ENCODE measurements at regions of chr20 and their contacts with region 1.

Region 1: DNA sequence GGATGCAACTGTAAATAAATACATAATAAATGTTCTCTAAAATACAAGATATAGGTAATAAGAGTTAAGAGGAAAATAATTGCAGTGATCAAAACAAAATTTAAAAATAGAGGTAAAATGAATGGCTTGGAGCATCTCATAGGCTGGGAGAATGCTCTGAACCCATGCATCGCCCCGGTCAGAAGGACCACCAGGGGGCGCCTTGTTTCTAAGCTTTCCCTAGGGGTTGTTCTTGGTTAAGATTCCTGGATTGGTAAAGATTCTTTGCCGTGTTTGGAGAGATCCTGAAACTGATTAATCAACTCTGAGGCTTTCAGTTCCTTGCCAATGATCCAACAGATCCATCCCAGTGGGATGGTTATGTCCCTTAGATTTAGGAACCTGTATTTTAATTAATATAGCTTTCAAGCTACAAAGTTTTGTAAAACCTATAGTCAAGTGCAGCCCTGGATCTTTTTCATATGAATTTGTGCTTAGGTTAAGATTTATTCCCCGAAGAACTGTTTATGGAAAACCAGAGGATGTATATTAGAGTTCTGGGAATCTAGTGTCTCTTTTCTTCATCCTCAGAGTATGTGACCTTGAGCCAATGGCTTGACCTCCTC is 45.3 kb upstream of the PRELID3B start:
- DNase-seq: peak; percentile 79
- H3K4me3 ChIP-seq: no peak overlapping the region
- H3K27ac ChIP-seq: no peak overlapping the region
- H3K4me1 ChIP-seq: no peaks in the 10 kb centered on the region
- H3K27me3 ChIP-seq: peaks cover 46% of the 10 kb centered on the region
- CTCF ChIP-seq: peak; percentile 91

Region 2: DNA sequence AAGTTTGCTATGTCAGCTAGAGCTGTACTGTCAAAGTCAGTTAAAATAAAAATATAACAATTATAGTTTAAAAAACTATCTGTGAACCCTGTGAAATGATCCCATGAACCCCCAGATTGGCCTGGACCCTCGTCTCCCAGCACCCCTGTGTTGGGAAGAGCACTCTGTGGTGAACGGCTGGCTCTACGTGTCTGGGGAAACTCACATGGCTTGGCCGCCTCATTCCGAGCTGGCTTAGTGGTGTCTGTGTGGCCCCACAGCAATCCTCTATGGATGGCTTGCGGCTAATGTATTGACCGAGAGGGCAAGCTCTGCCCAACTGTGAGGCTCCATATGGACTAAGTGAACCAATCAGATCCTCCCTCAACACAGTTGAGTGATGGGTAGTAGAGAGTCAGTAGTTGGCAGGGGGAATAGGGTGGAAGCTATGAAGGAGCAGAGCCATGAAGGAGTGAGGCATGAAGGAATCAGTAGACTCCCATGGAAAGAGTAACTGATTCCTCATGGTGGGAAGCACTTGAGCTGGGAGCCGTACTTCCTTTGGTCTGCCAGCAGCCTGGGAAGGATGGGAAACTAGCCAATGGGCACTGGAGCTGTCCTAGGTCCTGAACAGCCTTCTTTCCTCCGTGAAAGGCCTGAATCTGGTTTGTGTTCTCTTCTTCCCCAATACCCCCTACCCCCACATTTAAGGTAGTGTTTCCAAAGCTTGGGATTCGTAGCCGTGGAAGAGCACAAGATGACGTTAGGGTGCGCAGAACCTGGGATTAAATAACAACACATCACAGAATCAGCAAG is 54.1 kb after region 1 on chr20:
- CTCF ChIA-PET with region 1: no interaction called
- POLR2A ChIA-PET with region 1: no interaction called
- intact Hi-C with region 1: no loop called
- DNase-seq: peak; percentile 26
- H3K4me3 ChIP-seq: no peak overlapping the region
- H3K27ac ChIP-seq: no peak overlapping the region
- H3K4me1 ChIP-seq: no peaks in the 10 kb centered on the region
- H3K27me3 ChIP-seq: peaks cover 3% of the 10 kb centered on the region
- CTCF ChIP-seq: no peak

Region 3: GRCh38 chr20:59159493-59160376 is 71.8 kb after region 1 on chr20:
- CTCF ChIA-PET with region 1: no interaction called
- POLR2A ChIA-PET with region 1: no interaction called
- intact Hi-C with region 1: loop called (anchors 5 kb)
- DNase-seq: no peak
- H3K4me3 ChIP-seq: no peak overlapping the region
- H3K27ac ChIP-seq: no peak overlapping the region
- H3K4me1 ChIP-seq: no peaks in the 10 kb centered on the region
- H3K27me3 ChIP-seq: peaks cover 16% of the 10 kb centered on the region
- CTCF ChIP-seq: no peak

Region 4: GRCh38 chr20:59222253-59223181 is 134.6 kb after region 1 on chr20:
- CTCF ChIA-PET with region 1: interaction called, 15 read pairs
- POLR2A ChIA-PET with region 1: no interaction called
- intact Hi-C with region 1: loop called (anchors 1 kb)
- DNase-seq: peak; percentile 79
- H3K4me3 ChIP-seq: peak overlapping the region; percentile 47
- H3K27ac ChIP-seq: no peak overlapping the region
- H3K4me1 ChIP-seq: peaks cover 13% of the 10 kb centered on the region
- H3K27me3 ChIP-seq: peaks cover 79% of the 10 kb centered on the region
- CTCF ChIP-seq: peak; percentile 96

Region 5: GRCh38 chr20:59322899-59323454 is 235.0 kb after region 1 on chr20:
- CTCF ChIA-PET with region 1: no interaction called
- POLR2A ChIA-PET with region 1: no interaction called
- intact Hi-C with region 1: no loop called
- DNase-seq: no peak
- H3K4me3 ChIP-seq: no peak overlapping the region
- H3K27ac ChIP-seq: no peak overlapping the region
- H3K4me1 ChIP-seq: no peaks in the 10 kb centered on the region
- H3K27me3 ChIP-seq: peaks cover 16% of the 10 kb centered on the region
- CTCF ChIP-seq: no peak

Region 6: DNA sequence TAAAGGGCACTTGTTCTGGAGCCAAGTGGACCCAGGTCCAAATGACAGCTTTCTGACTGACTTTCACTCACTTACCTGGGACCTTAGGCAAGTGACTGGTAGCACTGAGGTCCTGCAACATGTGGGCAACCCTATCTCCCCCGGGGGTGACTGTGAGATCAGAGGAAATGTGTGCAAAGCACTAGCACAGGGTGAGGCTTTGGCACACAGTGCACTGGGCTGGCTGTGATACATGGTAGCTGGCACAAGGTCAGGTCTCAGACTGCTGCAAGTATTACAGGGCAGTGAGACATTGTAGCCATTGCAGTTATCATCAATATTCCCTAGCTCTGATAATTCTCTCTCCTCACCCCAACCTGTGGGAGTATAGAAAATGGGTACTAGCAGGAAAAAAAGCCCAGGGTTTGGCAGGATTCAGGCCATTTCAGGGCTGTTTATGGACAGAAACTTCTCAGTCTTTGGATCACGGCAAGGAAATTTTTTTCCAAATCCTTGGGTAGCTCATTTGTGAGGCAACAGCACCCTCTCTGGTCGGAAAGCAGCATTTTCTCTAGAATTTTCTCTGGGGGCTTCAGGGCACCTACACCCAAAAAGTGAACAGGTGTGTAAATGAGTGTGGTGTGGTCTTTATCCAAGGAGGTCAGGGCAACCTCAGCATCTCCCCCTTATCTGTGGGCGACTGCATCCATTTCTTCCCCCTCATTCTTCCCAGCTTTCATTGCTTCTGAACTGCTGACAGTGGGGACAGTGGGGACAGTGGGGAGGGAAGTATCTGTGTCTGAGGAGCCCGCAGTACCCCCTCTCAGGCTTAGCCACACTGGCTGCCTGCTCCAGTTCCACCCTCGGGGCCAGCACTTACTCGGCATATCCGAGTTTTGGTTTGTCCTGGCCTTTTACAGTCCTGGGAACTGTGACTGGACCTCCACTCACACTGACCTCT is 367.7 kb after region 1 on chr20:
- CTCF ChIA-PET with region 1: interaction called, 5 read pairs
- POLR2A ChIA-PET with region 1: no interaction called
- intact Hi-C with region 1: loop called (anchors 2 kb)
- DNase-seq: peak; percentile 42
- H3K4me3 ChIP-seq: no peak overlapping the region
- H3K27ac ChIP-seq: no peak overlapping the region
- H3K4me1 ChIP-seq: no peaks in the 10 kb centered on the region
- H3K27me3 ChIP-seq: peaks cover 3% of the 10 kb centered on the region
- CTCF ChIP-seq: peak; percentile 76

Region 7: GRCh38 chr20:59696476-59696875 is 608.5 kb after region 1 on chr20:
- CTCF ChIA-PET with region 1: no interaction called
- POLR2A ChIA-PET with region 1: no interaction called
- intact Hi-C with region 1: no loop called
- DNase-seq: no peak
- H3K4me3 ChIP-seq: no peak overlapping the region
- H3K27ac ChIP-seq: no peak overlapping the region
- H3K4me1 ChIP-seq: no peaks in the 10 kb centered on the region
- H3K27me3 ChIP-seq: peaks cover 72% of the 10 kb centered on the region
- CTCF ChIP-seq: no peak